ENCODE measurements at regions of chr17 and their contacts with region 1.

Region 1: DNA sequence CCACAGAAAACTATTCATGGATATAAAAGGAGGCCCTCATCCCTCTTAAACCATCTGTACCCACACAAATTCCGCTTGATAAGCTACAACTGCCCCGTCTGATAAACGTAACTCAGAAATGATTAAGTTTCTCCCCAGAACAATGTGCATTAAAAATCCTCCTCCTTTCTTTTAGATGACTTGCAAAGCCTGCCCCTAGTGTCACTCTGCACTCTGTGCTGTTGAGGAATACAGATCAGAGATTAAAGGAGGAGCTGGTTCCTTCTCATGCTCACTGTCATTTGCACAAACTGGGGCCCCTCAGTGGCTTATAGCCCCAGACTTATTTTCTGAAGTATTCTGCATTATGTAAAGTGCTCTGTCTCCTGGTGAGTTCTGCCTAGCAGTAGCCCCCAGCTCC is 33.3 kb downstream of the CDRT15 start:
- DNase-seq: no peak
- ATAC-seq: no peak
- H3K4me3 ChIP-seq: no peak overlapping the region
- H3K27ac ChIP-seq: peak overlapping the region in 1 of 12 donors; percentile 78
- H3K4me1 ChIP-seq: peaks cover 0 to 76% (median 14%) of the 10 kb centered on the region in 12 donors
- H3K27me3 ChIP-seq: no peaks in the 10 kb centered on the region
- CTCF ChIP-seq: peak in 6 of 12 donors; percentile 2 to 29 (median 21)
- POLR2A ChIP-seq: no peak

Region 2: DNA sequence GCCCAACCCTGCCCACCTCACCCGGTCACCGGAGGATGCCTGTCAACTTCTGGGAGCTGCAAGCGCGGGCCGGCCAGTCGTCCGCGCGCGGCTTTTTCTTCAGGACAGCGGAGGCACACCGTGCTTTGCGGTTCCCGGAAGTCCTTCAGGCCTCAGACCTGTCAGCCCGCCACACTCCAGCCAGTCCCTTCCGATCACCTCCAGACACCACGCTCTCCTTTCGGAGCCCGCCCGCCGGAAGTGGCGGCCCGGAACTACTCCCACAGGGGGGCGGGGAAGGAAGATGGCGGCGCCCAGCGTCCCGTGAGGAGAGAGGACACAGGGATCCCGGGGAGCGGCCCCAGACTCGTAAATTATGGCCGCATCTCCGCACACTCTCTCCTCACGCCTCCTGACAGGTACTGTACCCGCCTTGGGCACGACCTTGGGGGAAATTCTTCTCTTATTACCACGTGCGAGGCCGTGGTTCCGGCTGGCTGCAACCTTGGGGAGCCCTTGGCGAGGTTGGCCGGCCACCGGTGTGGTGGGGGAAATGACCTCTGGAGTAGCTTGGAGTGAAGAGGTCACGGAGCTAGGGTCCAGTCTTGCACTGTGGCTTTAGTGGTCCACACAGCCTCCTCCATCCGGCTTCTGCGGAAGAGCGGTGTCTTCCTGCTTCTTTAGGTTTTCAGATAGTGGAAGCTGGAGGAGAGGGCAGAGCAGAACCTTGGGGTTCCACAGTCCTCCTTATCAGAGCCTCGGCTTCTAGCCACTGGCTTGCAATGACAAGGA is 134.0 kb before region 1 on chr17 and contains the start of gene COX10:
- intact Hi-C with region 1: loop called in 2 of 10 experiments (anchors 10 kb)
- DNase-seq: peak; percentile 88 to 93 (median 91)
- ATAC-seq: peak; percentile 97 to 100 (median 99)
- H3K4me3 ChIP-seq: peak within 1 kb of the TSS; percentile 82 to 99 (median 94)
- H3K27ac ChIP-seq: peak within 1 kb of the TSS; percentile 84 to 96 (median 89)
- H3K4me1 ChIP-seq: peaks cover 0 to 39% (median 23%) of the 10 kb centered on the region in 12 donors
- H3K27me3 ChIP-seq: no peaks in the 10 kb centered on the region
- CTCF ChIP-seq: peak in 2 of 12 donors; percentile 5 to 15
- POLR2A ChIP-seq: peak in 1 of 2 donors; percentile 70
- total RNA-seq, gene COX10: 36.6 to 96.0 (median 55.4) TPM

Region 3: DNA sequence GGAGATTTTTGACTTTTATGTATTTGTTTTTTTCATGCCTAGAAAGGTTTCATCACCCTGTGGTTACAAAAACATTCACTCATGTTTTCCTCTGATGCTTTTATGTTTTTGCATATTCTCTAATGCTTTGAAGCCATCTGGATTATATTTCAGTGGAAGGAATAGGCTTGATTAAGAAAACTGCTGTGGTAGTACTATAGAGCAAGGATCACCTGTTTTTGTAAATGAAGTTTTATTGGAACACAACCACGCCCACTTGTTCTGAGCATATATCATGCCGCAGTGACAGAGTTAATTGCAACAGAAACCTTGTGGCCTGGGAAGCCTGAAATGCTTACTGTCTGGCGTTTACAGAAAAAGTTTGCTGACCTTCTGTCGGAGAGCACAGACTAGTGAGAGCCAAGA is 122.5 kb before region 1 on chr17:
- intact Hi-C with region 1: loop called in 2 of 10 experiments (anchors 10 kb)
- DNase-seq: no peak
- ATAC-seq: no peak
- H3K4me3 ChIP-seq: no peak overlapping the region
- H3K27ac ChIP-seq: no peak overlapping the region
- H3K4me1 ChIP-seq: peaks cover 0 to 43% (median 8%) of the 10 kb centered on the region in 12 donors
- H3K27me3 ChIP-seq: no peaks in the 10 kb centered on the region
- CTCF ChIP-seq: no peak
- POLR2A ChIP-seq: no peak

Region 4: GRCh38 chr17:14098224-14098623 is 105.2 kb before region 1 on chr17:
- intact Hi-C with region 1: loop called in 1 of 10 experiments (anchors 10 kb)
- DNase-seq: no peak
- ATAC-seq: no peak
- H3K4me3 ChIP-seq: no peak overlapping the region
- H3K27ac ChIP-seq: no peak overlapping the region
- H3K4me1 ChIP-seq: peaks cover 0 to 35% (median 8%) of the 10 kb centered on the region in 12 donors
- H3K27me3 ChIP-seq: no peaks in the 10 kb centered on the region
- CTCF ChIP-seq: no peak
- POLR2A ChIP-seq: no peak

Region 5: DNA sequence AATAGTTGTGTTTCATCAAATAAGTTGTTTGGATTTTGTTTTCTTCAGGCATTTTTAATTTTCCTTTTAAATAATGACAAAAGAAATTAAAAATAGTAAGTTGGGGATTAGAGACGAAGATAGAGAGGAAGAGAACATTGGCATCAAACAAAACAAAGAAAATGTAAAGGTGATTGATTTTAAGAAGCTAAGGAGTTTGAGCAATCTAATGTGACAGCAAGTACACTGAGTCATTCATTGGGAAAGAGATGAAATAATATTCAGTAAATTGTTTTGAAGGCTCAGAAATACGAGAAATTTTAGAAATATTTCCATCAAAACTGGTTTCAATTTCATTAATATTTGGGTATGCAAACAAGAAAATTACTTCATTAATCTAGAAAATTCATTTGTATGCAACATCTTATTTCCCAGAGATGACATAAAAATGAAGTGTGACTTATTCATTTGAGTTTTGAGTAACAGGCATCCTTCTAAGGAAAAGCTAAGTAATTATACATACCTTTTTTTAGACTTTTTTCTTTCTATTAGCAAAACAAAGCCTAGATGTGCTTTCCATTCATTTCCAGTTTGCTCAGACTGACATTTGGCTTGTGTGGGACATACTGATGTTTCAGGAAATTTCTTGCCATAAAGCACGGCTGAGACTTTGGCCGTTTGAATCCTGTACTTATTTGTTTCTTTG is 67.3 kb before region 1 on chr17:
- intact Hi-C with region 1: no loop called
- DNase-seq: no peak
- ATAC-seq: no peak
- H3K4me3 ChIP-seq: no peak overlapping the region
- H3K27ac ChIP-seq: no peak overlapping the region
- H3K4me1 ChIP-seq: peaks cover 0 to 3% (median 0%) of the 10 kb centered on the region in 12 donors
- H3K27me3 ChIP-seq: no peaks in the 10 kb centered on the region
- CTCF ChIP-seq: no peak
- POLR2A ChIP-seq: no peak

Region 6: DNA sequence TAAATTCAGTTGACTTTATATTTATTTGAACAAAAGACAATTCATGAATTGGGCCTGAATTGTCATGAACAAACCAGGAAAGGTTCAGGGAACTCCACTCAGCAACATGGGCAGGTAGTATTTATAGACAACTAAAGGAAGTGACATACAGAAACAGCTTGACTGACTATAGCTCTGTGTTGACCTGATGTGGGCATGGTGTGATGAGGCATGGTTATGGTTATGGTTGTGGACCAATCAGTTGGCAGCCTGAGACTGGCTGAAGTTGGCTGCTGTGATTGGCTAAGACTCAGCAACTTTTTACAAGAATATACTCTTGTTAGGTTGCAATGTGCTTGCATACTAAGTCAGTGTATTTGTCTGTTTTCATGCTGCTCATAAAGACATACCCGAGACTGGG is 205.9 kb after region 1 on chr17:
- intact Hi-C with region 1: no loop called
- DNase-seq: no peak
- ATAC-seq: no peak
- H3K4me3 ChIP-seq: no peak overlapping the region
- H3K27ac ChIP-seq: no peak overlapping the region
- H3K4me1 ChIP-seq: no peaks in the 10 kb centered on the region
- H3K27me3 ChIP-seq: no peaks in the 10 kb centered on the region
- CTCF ChIP-seq: no peak
- POLR2A ChIP-seq: no peak

Region 7: GRCh38 chr17:14594690-14595089 is 391.3 kb after region 1 on chr17:
- intact Hi-C with region 1: no loop called
- DNase-seq: no peak
- ATAC-seq: no peak
- H3K4me3 ChIP-seq: no peak overlapping the region
- H3K27ac ChIP-seq: no peak overlapping the region
- H3K4me1 ChIP-seq: no peaks in the 10 kb centered on the region
- H3K27me3 ChIP-seq: peaks cover 0 to 25% (median 0%) of the 10 kb centered on the region in 9 donors
- CTCF ChIP-seq: no peak
- POLR2A ChIP-seq: no peak

Measured in heart left ventricle (tissue), 16 donors.